PC-3 (cell line): ENCODE measurements at regions of chr6 and their contacts with region 1.

Region 1: GRCh38 chr6:89940225-89941027 is 46.2 kb downstream of the GJA10 start:
- DNase-seq: peak; percentile 78
- ATAC-seq: peak; percentile 83
- H3K4me3 ChIP-seq: no peak overlapping the region
- H3K27ac ChIP-seq: no peak overlapping the region
- H3K4me1 ChIP-seq: peaks cover 13% of the 10 kb centered on the region
- H3K27me3 ChIP-seq: no peaks in the 10 kb centered on the region
- CTCF ChIP-seq: peak; percentile 75

Region 2: DNA sequence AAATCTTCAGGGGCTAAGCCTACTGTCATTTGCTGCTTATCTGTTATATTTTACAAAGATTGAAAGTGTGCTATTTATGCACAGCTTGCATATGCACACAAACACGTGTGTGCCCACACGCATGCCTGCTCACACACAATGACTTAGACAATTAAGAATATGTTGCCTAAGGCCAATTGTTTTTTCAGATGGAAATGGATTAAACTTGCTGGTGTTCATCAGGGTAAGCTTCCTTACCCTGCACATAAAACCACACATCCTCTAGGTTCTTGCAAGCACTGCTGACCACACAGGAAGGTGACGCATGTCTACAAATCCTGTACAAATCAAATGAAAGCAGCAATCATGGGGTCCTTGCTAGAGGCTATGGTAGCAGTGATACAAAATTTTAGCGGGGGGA is 12.3 kb after region 1 on chr6:
- CTCF ChIA-PET with region 1: interaction called, 22 read pairs
- POLR2A ChIA-PET with region 1: no interaction called
- intact Hi-C with region 1: loop called (anchors 1 kb)
- DNase-seq: peak; percentile 92
- ATAC-seq: peak; percentile 81
- H3K4me3 ChIP-seq: peak overlapping the region; percentile 16; the same call in 1 of the 2 replicates
- H3K27ac ChIP-seq: peak overlapping the region; percentile 90
- H3K4me1 ChIP-seq: peaks cover 44% of the 10 kb centered on the region
- H3K27me3 ChIP-seq: no peaks in the 10 kb centered on the region
- CTCF ChIP-seq: no peak

Region 3: GRCh38 chr6:89984926-89985750 is 44.7 kb after region 1 on chr6:
- CTCF ChIA-PET with region 1: no interaction called
- POLR2A ChIA-PET with region 1: no interaction called
- intact Hi-C with region 1: no loop called
- DNase-seq: no peak
- ATAC-seq: peak; percentile 20; the same call in 1 of the 2 replicates
- H3K4me3 ChIP-seq: no peak overlapping the region
- H3K27ac ChIP-seq: no peak overlapping the region
- H3K4me1 ChIP-seq: peaks cover 10% of the 10 kb centered on the region; the same call in 1 of the 2 replicates
- H3K27me3 ChIP-seq: no peaks in the 10 kb centered on the region
- CTCF ChIP-seq: no peak

Region 4: DNA sequence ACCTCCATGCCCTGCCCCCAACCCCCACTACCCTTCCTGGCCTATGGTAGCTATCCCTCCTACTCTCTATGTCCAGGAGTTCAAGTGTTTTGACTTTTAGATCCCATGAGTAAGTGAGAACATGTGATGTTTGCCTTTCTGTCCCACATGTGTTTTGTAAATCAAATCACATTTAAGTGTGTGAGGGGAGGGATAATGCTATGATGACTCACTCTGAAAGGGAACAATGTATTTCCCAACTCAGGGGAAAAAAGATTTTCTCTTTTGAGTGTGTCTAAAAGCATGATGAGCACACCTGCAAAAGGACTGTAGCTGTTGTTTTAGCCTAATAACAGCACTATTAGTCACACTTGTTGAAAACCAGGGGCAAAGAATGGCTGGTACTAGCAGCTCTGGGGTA is 147.6 kb after region 1 on chr6:
- CTCF ChIA-PET with region 1: no interaction called
- POLR2A ChIA-PET with region 1: no interaction called
- intact Hi-C with region 1: loop called (anchors 5 kb)
- DNase-seq: peak; percentile 75
- ATAC-seq: peak; percentile 45
- H3K4me3 ChIP-seq: no peak overlapping the region
- H3K27ac ChIP-seq: peak overlapping the region; percentile 78
- H3K4me1 ChIP-seq: peaks cover 29% of the 10 kb centered on the region
- H3K27me3 ChIP-seq: no peaks in the 10 kb centered on the region
- CTCF ChIP-seq: no peak

Region 5: GRCh38 chr6:90296346-90297114 is 356.1 kb after region 1 on chr6 and contains the start of gene BACH2:
- CTCF ChIA-PET with region 1: no interaction called
- POLR2A ChIA-PET with region 1: no interaction called
- intact Hi-C with region 1: loop called (anchors 5 kb)
- DNase-seq: peak; percentile 84
- ATAC-seq: peak; percentile 70
- H3K4me3 ChIP-seq: peak within 1 kb of the TSS; percentile 90
- H3K27ac ChIP-seq: no peak within 1 kb of the TSS
- H3K4me1 ChIP-seq: 0 out of 2 replicates have a peak, but pooled peaks cover 4% of the 10 kb centered on the region
- H3K27me3 ChIP-seq: no peaks in the 10 kb centered on the region
- CTCF ChIP-seq: no peak
- total RNA-seq, gene BACH2: 4.8 and 7.0 TPM in 2 replicates

Region 6: DNA sequence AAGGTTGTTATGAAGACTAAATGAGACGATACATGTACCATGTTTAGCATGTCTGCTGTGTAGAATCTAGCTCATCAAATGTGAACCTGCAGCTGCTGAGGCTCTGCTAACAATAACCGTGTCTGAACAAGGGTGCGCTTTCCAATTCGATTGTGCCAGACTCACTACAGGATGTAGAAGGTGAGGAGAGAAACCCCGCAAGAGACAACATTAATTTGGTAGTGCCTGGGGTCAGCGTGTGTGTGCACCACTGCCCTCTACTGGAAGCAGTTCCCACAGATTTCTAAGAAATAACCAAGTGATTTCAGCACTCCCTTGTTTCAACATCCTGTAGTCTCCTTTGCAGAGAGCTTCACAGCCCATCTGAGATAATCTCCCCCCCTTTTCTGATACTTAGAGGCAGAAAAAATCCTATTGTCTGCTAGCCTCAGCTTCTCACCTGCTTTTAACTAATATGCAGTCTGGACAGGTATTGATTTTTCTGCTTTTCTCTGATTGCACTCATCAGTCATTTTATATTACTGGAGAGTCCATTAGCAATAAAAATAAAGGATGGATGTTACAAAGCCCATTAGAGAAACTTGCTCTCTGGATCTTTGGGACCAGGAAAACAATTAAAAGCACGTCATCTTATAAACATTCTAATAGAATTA is 452.9 kb after region 1 on chr6:
- CTCF ChIA-PET with region 1: interaction called, 8 read pairs
- POLR2A ChIA-PET with region 1: no interaction called
- intact Hi-C with region 1: loop called (anchors 1 kb)
- DNase-seq: peak; percentile 69
- ATAC-seq: peak; percentile 62
- H3K4me3 ChIP-seq: no peak overlapping the region
- H3K27ac ChIP-seq: no peak overlapping the region
- H3K4me1 ChIP-seq: peaks cover 16% of the 10 kb centered on the region
- H3K27me3 ChIP-seq: no peaks in the 10 kb centered on the region
- CTCF ChIP-seq: peak; percentile 75